Endothelial cell of umbilical vein (primary cell): ENCODE measurements at regions of chr1 and their contacts with region 1.

Region 1: DNA sequence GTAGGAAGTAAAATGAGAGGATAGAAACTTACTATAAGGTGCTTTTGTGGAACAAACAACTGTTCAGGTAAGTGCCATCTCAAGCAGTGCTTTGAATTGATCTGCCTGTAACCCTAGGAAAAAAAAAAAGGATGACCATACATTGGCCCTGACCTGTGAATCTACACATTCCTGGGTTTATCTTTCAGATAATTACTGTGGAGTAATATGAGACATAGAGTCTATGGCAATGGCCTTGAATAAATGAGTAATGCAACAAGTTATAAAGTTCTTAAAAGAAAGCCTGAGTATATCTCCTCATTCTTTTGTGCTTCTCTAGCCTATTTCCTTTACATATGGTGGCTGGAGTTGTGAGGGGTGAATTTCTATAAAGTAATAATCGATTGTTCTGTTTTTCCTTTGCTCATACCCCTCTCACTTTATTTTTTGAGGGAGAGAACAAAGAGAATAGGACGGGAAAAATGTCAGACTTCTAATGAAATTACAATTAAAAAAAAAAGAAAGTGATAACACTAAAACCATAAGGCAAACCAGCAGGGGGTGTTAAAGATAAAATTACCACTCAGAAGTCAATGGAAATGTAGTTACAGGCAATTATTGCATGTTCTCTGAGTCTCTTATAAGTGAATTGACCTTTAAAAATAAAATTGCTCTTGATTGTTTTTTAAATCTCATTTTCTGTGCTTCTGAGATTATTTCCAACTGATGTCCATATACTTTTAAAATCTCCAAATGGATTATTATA is 12.4 kb upstream of the ATP1A1 start:
- DNase-seq: peak; percentile 65
- H3K4me3 ChIP-seq: no peak overlapping the region
- H3K27ac ChIP-seq: no peak overlapping the region
- H3K4me1 ChIP-seq: peaks cover 21% of the 10 kb centered on the region
- H3K27me3 ChIP-seq: peaks cover 0 to 3% of the 10 kb centered on the region in 2 experiments
- CTCF ChIP-seq: peak; percentile 26 to 27
- POLR2A ChIP-seq: no peak

Region 2: DNA sequence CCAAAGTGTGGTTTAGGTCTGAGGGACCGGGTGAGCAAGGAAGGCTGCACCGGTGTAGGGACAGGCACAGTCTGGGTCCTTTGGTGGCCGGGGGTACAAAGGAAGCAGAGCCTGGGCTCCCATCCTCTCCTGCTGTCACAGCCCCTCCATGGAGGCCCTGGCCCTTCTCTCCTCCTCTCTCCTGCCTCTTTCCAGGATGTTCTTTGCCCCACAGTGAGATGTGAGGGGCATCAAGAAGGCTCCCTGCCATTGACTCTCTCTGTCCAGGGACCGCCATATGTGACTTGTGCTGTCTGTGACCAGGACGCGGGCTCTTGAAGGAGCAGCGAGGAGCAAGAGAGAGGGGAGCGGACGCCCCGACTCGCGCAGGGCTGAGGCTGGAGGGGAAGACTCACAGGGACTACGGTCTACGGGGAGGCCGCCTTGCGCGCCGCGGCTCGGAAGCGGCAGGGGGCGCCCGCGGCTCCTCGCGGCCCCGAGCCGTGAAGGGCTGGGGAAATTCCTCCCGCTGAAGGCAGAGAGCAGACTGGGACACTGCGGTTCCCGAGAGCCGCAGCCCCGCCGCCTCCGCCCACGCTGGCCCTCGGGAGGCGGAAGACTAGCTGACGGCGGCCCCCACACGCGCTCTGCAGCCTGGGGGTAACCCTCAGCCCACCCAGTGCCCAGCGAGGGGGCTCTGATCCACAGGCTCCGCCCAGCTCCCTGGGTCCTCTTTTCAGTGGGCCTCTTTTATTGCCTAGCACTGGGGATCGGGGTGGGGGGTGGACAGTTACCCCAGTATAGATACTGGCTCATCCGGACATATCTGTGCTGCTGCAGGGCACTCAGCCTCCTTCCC is 208.6 kb before region 1 on chr1:
- CTCF ChIA-PET with region 1: interaction called, 3 read pairs
- POLR2A ChIA-PET with region 1: no interaction called
- dilution Hi-C with region 1: no loop called
- intact Hi-C with region 1: loop called (anchors 5 kb)
- DNase-seq: peak; percentile 78
- H3K4me3 ChIP-seq: peak overlapping the region; percentile 34 to 42 (median 37)
- H3K27ac ChIP-seq: peak overlapping the region; percentile 84
- H3K4me1 ChIP-seq: peaks cover 16% of the 10 kb centered on the region
- H3K27me3 ChIP-seq: peaks cover 5 to 9% of the 10 kb centered on the region in 2 experiments
- CTCF ChIP-seq: peak; percentile 88 to 90
- POLR2A ChIP-seq: no peak

Region 3: DNA sequence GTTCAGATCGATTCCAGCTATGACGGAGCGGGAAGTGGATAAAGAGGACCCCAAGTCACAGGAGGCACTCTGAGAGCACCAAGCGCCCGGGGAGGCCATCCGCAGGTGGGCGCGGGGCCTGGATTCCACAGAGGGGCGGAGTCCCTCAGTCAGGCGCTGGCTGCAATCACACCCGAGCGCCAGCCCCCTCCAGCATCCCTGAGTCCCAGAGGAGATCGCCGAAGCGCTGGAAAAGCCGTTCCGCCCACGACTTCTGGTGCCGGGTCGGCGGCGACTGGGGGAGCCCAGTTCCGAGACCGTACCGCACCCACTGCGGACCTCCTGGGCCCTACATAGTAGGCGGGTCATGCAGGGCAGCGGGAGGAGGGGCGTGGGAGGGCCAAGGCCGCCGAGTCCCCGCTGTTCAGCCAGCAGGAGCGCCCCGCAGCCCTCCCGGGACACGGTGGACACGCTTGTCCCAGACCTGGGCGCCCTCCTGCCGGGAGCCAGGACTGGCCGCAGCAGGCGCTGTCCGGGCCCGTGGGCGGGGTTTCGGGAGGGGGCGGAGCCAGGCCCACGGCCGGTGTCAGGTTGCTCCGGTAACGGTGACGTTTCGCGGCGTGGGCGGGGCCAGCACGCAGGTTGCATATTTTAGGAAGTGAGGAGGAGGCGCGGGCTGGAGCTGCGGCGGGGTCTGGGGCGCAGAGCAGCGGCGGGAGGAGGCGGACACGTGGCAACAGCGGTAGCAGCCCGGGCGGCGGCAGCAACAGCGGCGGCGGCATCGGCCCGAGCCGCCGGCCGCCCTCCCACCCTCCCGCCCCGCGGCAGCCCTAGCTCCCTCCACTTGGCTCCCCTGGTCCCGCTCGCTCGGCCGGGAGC is 12.2 kb after region 1 on chr1 and contains the start of gene ATP1A1:
- CTCF ChIA-PET with region 1: interaction called, 14 read pairs
- POLR2A ChIA-PET with region 1: interaction called, 3 read pairs
- dilution Hi-C with region 1: no loop called
- intact Hi-C with region 1: loop called (anchors 2 kb)
- DNase-seq: peak; percentile 96
- H3K4me3 ChIP-seq: peak within 1 kb of the TSS; percentile 91 to 96 (median 94)
- H3K27ac ChIP-seq: peak within 1 kb of the TSS; percentile 96
- H3K4me1 ChIP-seq: peaks cover 37% of the 10 kb centered on the region
- H3K27me3 ChIP-seq: peaks cover 10 to 26% of the 10 kb centered on the region in 2 experiments
- CTCF ChIP-seq: peak in 1 of 2 donors; percentile 12
- POLR2A ChIP-seq: peak; percentile 93
- total RNA-seq, gene ATP1A1: 263 and 325 TPM in 2 replicates